CD4-positive, alpha-beta memory T cell (primary cell): ENCODE measurements at regions of chr1 and their contacts with region 1.

Region 1: DNA sequence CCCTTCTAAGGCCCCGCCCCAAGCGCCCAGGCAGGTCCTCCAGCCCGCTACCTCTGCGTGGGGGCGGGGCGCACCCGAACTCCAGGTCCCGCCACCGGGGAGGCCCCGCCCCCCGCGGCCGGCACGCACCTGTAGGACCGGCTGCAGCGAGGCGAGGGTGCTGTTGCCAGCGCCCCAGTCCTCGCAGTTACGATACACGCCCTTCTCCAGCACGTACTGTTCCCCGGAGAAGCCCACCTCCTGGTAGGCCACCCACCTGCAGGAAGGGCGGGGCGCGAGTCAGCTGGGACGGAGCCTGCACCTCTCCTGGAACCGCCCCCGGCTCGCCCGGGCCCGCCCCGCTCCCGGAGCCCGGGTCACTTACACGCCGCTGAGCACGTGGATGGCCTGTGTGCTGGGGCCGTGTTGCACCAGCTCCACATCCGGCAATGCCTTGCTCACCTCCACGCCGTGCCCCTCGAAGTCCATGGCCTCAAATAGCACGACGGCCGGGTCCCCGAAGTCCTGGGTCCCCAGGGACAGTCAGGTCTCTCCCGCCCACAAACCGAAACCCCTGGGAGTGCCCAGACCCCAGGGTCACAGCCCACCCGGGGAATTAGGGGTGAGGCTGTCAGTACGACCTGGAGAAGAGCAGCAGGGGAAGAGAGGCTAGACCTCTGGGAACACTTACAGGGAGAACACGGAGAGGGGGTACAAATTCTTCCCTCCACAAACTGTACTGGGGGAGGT is 17.3 kb downstream of the CRYBG2 start:
- DNase-seq: peak; percentile 79 to 88 (median 82)
- H3K4me3 ChIP-seq: peak overlapping the region; percentile 61 to 73
- H3K4me3 Mint-ChIP-seq: peak overlapping the region; percentile 89 to 95 (median 92)
- H3K27ac ChIP-seq: peak overlapping the region; percentile 49
- H3K27ac Mint-ChIP-seq: peak overlapping the region in 6 of 7 donors; percentile 12 to 75 (median 62)
- H3K4me1 ChIP-seq: peaks cover 19% of the 10 kb centered on the region
- H3K4me1 Mint-ChIP-seq: peaks cover 0 to 33% (median 9%) of the 10 kb centered on the region in 4 donors
- H3K27me3 ChIP-seq: no peaks in the 10 kb centered on the region
- H3K27me3 Mint-ChIP-seq: no peaks in the 10 kb centered on the region

Region 2: GRCh38 chr1:26254404-26254803 is 82.2 kb before region 1 on chr1:
- CTCF ChIA-PET with region 1: no interaction called
- POLR2A ChIA-PET with region 1: no interaction called
- intact Hi-C with region 1: no loop called
- DNase-seq: no peak
- H3K4me3 ChIP-seq: no peak overlapping the region
- H3K4me3 Mint-ChIP-seq: no peak overlapping the region
- H3K27ac ChIP-seq: no peak overlapping the region
- H3K27ac Mint-ChIP-seq: peak overlapping the region in 2 of 7 donors; percentile 14 to 55
- H3K4me1 ChIP-seq: no peaks in the 10 kb centered on the region
- H3K4me1 Mint-ChIP-seq: peaks cover 0 to 9% (median 2%) of the 10 kb centered on the region in 4 donors
- H3K27me3 ChIP-seq: no peaks in the 10 kb centered on the region
- H3K27me3 Mint-ChIP-seq: no peaks in the 10 kb centered on the region

Region 3: DNA sequence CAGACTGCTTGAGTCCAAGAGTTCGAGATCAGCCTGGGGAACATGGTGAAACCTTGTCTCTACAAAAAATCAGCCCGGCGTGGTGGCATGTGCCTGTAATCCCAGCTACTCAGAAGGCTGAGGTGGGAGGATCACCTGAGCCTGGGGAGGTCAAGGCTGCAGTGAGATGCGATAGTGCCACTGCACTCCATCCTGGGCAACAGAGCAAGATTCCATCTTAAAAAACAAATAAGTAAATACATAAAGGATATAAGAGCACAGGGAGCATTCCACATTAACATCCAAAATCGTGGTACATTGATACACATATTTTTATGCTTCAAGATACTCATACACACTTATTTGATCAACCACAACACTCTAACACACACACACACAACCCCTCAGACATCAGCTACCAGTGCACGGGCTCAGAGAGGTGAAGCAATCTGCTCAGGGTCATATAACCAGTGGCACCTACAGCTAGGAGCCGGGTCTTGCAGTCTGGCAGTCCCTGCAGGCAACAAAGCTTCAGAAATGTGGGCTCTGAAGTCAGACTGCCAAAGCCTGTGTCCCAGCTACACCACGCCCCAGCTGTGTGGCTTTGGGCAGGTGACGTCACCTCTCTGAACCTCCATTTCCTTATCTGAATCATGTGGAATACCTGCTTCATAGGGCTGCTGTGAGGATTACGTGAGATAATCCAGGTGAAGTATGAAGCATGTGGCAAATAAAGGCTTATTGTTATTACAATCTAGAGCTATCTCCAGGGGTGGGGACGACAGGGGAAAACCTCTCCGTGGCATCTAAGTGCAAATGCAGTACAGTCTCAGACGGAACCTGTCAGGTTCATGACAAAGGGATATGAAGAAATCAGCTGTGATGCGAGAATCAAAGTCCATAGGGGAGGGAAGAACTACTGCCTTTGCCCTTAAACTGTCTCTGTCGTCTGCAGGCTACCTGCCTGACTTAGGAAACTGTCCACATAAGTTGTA is 22.1 kb after region 1 on chr1:
- CTCF ChIA-PET with region 1: interaction called, 12 read pairs
- POLR2A ChIA-PET with region 1: interaction called, 5 read pairs
- intact Hi-C with region 1: loop called (anchors 1 kb)
- DNase-seq: peak; percentile 79 to 95 (median 81)
- H3K4me3 ChIP-seq: peak overlapping the region in 1 of 2 donors; percentile 44
- H3K4me3 Mint-ChIP-seq: peak overlapping the region; percentile 58 to 88 (median 74)
- H3K27ac ChIP-seq: peak overlapping the region; percentile 40
- H3K27ac Mint-ChIP-seq: peak overlapping the region; percentile 79 to 97 (median 94)
- H3K4me1 ChIP-seq: peaks cover 56% of the 10 kb centered on the region
- H3K4me1 Mint-ChIP-seq: peaks cover 27 to 70% (median 41%) of the 10 kb centered on the region in 4 donors
- H3K27me3 ChIP-seq: no peaks in the 10 kb centered on the region
- H3K27me3 Mint-ChIP-seq: no peaks in the 10 kb centered on the region

Region 4: DNA sequence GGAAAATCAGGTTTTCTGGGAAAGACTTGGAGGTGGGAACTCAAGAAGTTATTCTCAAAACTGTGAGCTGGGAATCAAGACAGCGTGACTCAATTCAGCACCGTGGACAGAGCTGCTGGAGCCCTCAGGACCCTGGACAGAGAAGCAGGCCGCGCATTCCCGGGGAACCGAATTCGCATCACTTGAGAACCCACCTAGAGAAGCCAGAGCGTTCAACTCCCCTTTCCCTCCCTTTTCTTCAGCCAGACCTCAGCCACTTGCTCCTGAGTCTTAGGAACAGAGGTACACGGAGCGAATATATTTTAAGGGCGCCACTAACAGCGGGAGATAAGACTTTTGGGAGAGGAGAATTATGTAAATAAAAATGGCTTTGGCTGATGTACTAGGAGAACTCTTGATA is 72.0 kb after region 1 on chr1:
- CTCF ChIA-PET with region 1: no interaction called
- POLR2A ChIA-PET with region 1: no interaction called
- intact Hi-C with region 1: loop called (anchors 5 kb)
- DNase-seq: peak; percentile 75 to 84 (median 78)
- H3K4me3 ChIP-seq: no peak overlapping the region
- H3K4me3 Mint-ChIP-seq: peak overlapping the region; percentile 23 to 79 (median 62)
- H3K27ac ChIP-seq: no peak overlapping the region
- H3K27ac Mint-ChIP-seq: peak overlapping the region in 2 of 7 donors; percentile 49 to 74
- H3K4me1 ChIP-seq: peaks cover 17% of the 10 kb centered on the region
- H3K4me1 Mint-ChIP-seq: peaks cover 9 to 24% (median 17%) of the 10 kb centered on the region in 4 donors
- H3K27me3 ChIP-seq: peaks cover 37% of the 10 kb centered on the region
- H3K27me3 Mint-ChIP-seq: peaks cover 32 to 42% of the 10 kb centered on the region in 2 donors

Region 5: DNA sequence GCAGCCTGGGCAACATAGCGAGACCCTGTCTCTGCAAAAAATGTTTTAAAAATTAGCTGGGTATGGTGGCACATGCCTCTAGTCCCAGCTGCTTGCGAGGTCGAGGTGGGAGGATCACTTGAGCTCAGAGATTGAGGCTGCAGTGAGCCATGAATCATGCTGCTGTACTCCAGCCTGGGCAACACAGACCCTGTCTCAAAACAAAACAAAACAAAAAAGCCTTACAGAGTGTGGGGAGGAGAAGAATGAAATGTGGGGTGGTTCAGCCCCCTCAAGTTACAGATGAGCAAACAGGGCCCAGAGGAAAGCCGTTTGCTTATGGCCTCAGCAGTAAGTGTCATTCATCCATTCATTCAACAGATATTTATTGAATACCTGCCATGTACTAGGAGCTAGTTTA is 233.6 kb after region 1 on chr1:
- CTCF ChIA-PET with region 1: no interaction called
- POLR2A ChIA-PET with region 1: no interaction called
- intact Hi-C with region 1: no loop called
- DNase-seq: no peak
- H3K4me3 ChIP-seq: no peak overlapping the region
- H3K4me3 Mint-ChIP-seq: no peak overlapping the region
- H3K27ac ChIP-seq: no peak overlapping the region
- H3K27ac Mint-ChIP-seq: peak overlapping the region in 5 of 7 donors; percentile 41 to 77 (median 52)
- H3K4me1 ChIP-seq: no peaks in the 10 kb centered on the region
- H3K4me1 Mint-ChIP-seq: peaks cover 3 to 10% (median 5%) of the 10 kb centered on the region in 4 donors
- H3K27me3 ChIP-seq: no peaks in the 10 kb centered on the region
- H3K27me3 Mint-ChIP-seq: no peaks in the 10 kb centered on the region